Brain microvascular endothelial cell (primary cell): ENCODE measurements at regions of chr4 and their contacts with region 1.

Region 1: DNA sequence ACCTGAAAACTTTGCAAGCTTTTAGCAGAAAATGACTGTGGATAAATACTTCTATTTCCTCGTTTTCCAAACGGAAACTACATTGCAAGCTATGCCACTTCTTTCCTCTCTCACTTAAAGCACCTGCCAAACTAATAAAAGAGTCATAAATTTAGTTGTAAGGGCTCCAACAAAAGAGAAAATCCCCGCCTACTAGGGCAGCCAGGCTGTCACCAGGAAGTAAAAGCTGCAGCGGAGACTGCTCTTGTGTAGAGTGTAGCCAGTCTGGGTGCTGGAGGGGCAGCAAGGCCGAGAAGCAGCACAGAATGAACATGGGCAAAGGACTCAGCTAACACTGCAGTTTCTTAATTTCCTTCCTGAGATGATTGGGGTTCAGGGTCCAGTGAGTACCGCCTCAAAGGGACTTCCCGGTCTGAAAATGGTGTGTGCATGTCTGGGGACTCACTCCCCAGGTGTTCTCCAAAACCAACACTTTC is 89.3 kb upstream of the MAML3 start:
- DNase-seq: no peak
- H3K4me3 ChIP-seq: no peak overlapping the region
- H3K27ac ChIP-seq: no peak overlapping the region
- H3K27me3 ChIP-seq: no peaks in the 10 kb centered on the region
- CTCF ChIP-seq: no peak

Region 2: DNA sequence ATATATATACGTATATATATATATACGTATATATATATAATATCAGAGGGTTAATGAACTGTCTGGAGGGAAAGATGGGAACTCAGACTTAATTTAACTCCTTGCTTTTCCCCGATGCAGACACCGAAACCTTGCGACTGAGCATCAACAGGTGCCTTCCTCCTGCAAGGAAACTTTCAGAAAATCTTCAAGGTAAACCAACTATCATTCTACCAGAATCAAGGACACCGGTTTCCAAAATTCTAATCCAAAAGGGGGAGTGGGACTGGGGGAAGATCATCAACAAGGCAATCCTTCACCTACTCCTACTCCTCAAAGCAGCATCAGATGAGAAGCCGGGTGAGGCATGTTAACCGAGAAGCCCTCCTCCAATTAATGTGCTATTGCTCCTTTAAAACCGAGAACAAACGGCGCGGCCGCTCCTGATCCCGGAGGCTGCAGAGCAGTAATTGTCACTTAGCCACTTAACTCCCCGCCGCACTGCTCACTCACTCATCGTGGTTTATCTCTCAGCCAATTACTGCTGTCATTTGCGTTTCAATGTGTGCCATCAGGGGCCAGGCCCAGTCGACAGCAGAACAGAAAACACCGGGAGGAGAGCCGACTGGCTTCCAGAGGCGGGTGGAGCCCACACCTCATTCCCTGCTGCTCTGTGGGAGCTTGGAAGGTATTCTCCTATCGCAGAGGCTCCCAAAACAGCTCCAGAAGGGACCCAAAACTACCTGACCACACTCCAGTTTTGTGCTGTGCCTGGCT is 151.0 kb before region 1 on chr4:
- in situ Hi-C with region 1: no loop called
- DNase-seq: no peak
- H3K4me3 ChIP-seq: peak overlapping the region; percentile 3
- H3K27ac ChIP-seq: peak overlapping the region; percentile 18
- H3K27me3 ChIP-seq: no peaks in the 10 kb centered on the region
- CTCF ChIP-seq: no peak

Region 3: DNA sequence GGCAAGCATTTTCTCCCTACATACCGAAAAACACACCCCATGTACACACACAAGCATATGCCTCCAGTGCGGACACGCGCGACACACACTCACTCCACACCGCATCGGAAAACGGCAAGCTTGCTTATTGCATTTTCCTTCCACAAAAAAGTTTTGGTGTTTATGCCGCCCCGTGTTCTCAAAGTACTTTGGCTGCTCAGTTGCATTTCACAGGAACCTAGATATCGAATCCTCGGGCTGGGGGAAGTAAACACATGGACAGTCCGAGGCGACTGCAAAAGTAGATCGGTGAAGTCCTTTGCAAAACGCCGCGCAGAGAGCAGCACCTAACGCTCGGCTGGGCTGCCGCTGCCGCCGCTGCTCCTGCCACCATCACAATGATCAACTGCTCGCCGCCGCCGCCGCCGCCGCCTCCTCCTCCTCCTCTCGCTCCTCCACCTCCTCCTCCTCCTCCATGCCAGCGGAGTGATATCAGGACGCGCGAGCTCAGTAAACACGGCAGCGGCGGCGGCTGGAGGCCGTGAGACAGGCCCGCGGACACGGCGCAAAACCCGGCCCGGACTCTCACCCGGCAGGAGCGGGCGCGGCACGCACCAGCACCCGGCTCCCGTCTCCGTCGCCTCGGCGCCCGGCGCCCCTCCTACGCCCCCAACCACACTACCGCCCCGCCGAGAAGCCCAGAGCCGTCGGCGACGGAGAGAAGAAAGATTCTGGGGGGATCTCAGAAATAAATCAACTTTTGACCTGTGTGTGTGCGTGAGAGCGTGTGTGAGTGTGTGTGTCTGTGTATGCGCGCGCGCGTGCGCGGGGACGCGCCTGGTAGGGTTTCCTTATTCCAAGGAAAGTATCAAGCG is 89.4 kb before region 1 on chr4 and contains the start of gene MAML3:
- in situ Hi-C with region 1: loop called (anchors 10 kb)
- DNase-seq: peak; percentile 95
- H3K4me3 ChIP-seq: peak within 1 kb of the TSS; percentile 81
- H3K27ac ChIP-seq: peak within 1 kb of the TSS; percentile 84
- H3K27me3 ChIP-seq: no peaks in the 10 kb centered on the region
- CTCF ChIP-seq: no peak